ENCODE measurements at regions of chr1 and their contacts with region 1.

Region 1: DNA sequence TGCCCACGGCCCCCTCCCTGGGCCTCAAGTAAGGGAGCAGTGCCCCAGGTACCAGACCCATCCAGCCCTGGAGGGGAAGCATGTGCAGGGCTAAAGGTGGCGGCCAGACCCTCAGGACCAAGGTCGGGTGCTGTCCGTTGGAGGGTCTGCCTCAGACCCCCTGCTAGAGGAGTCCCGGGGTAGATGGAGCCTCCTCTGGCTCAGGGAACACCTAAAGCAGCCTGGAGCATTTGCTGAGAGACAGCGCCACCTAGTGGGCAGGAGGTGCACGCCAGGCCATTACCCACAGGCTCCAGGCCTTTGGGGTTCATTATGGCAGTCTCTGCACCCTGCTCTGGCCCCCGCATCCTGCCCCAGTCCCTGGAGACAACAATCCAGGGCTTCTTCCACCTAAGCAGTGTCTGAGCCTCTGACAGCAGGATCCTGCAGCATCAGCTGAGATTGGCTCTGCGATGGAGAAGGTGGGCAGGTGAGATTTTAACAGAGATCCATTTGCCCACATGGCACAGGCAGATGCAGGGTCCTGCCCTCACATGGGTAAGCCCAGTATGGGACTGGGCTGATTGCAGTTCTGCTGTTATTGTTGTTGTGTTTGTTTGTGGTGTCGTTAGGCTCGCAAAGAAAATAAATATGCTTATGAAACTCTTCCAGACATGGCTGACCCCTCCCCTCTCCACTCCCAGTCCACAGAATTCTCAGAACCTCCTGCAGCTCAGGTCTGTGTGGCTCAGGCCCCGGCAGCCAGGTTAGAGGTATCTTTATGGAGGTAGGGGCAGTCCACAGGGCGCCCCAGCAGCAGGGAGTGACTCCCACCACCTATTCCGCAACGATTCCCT is 42.4 kb downstream of the CTNNBIP1 start:
- DNase-seq: peak; percentile 96
- H3K4me3 ChIP-seq: no peak overlapping the region
- H3K27ac ChIP-seq: peak overlapping the region in 1 of 8 donors; percentile 9
- H3K4me1 ChIP-seq: peaks cover 22 to 59% (median 39%) of the 10 kb centered on the region in 6 donors
- H3K27me3 ChIP-seq: peaks cover 0 to 25% (median 0%) of the 10 kb centered on the region in 7 donors
- CTCF ChIP-seq: peak; percentile 95 to 99 (median 99)
- POLR2A ChIP-seq: no peak

Region 2: DNA sequence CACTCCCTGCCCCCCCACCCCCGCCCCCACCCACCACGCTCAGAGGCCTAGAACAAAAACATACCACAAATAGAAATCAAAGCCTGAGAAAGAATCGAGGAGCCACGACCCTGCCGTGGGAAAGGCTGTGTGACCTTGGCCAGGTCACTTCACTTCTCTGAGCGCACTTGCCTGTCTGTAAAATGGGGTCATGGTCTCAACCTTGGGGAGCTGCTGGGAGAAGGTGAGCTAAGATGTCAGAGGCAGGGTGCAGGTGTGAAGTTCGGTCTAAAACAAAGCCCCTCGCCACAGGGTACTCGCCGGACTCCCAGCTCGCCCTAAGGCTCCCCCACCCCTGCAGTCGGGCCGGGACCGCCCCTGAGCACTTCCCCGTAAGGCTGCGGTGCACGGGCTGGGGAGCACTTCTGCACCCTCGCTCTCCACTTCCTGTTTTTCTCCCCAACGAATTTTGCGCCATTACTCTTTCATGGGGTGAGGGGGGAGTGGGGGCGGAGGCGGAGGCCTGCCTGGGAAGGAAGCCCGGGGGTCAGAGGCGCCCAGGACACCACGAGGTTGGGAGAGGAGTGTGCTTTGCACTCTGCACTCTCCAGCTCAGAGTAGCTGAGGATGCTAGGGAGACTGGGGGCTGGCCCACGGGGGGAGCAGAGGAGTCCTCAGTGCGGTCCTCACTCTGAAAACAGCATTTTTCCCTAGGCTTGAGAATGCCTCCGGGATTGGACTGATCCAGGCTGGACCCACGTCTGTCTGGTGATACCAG is 238.0 kb before region 1 on chr1:
- intact Hi-C with region 1: loop called (anchors 10 kb)
- DNase-seq: peak; percentile 98
- H3K4me3 ChIP-seq: peak overlapping the region; percentile 30 to 75 (median 50)
- H3K27ac ChIP-seq: peak overlapping the region; percentile 77 to 96 (median 90)
- H3K4me1 ChIP-seq: peaks cover 24 to 93% (median 58%) of the 10 kb centered on the region in 6 donors
- H3K27me3 ChIP-seq: peaks cover 0 to 10% (median 0%) of the 10 kb centered on the region in 7 donors
- CTCF ChIP-seq: peak in 2 of 11 experiments; percentile 21 to 28
- POLR2A ChIP-seq: no peak

Region 3: DNA sequence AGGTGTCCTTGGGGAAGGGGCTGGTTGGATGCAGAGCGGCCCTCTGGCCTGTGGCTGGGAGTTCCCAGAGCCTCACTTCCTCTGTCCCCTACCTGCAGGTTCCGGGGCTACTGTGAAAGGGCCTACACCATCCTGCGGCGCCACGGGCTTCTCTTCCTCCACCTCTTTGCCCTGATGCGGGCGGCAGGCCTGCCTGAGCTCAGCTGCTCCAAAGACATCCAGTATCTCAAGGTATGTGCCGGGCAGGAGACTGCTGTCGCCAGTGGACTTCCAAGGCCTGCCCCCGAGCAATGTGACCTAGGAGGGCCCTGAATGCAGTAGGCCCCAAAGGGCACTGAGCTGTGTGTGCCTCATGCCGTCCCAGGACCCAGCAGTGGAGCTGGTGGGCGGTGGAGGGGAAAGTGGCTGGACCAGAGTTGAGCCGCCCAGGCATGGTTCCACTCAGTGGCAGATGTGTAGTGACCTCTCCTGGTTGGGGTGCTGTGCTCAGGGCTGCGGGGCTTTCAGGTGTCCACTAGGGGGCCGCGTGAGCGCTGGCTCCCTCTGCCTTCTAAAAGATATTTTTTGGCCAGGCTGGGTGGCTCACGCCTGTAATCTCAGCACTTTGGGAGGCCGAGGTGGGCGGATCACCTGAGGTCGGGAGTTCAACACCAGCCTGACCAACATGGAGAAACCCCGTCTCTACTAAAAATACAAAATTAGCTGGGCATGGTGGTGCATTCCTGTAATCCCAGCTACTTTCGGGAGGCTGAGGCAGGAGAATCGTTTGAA is 142.7 kb before region 1 on chr1:
- intact Hi-C with region 1: loop called (anchors 10 kb)
- DNase-seq: peak; percentile 93
- H3K4me3 ChIP-seq: no peak overlapping the region
- H3K27ac ChIP-seq: peak overlapping the region in 6 of 8 donors; percentile 4 to 97 (median 32)
- H3K4me1 ChIP-seq: peaks cover 0 to 76% (median 31%) of the 10 kb centered on the region in 6 donors
- H3K27me3 ChIP-seq: peaks cover 0 to 5% (median 0%) of the 10 kb centered on the region in 7 donors
- CTCF ChIP-seq: peak; percentile 84 to 97 (median 90)
- POLR2A ChIP-seq: no peak

Region 4: GRCh38 chr1:9784508-9785133 is 83.0 kb before region 1 on chr1:
- intact Hi-C with region 1: loop called (anchors 5 kb)
- DNase-seq: no peak
- H3K4me3 ChIP-seq: no peak overlapping the region
- H3K27ac ChIP-seq: no peak overlapping the region
- H3K4me1 ChIP-seq: peaks cover 6 to 50% (median 23%) of the 10 kb centered on the region in 6 donors
- H3K27me3 ChIP-seq: no peaks in the 10 kb centered on the region
- CTCF ChIP-seq: peak; percentile 60 to 81 (median 75)
- POLR2A ChIP-seq: no peak